Activated T-helper 1 cell treated with anti-CD3 and anti-CD28 coated beads, Interleukin-12 subunit alpha, Interleukin-12 subunit beta, Interleukin-2, Interleukin-4 antibody, amounts not matched to agents 30 ng/mL and 10 ng/mL and 1 ng/mL, durations not matched to agents 14 hours and 24 hours and 36 hours (primary cell): ENCODE measurements at regions of chr5 and their contacts with region 1.

Region 1: DNA sequence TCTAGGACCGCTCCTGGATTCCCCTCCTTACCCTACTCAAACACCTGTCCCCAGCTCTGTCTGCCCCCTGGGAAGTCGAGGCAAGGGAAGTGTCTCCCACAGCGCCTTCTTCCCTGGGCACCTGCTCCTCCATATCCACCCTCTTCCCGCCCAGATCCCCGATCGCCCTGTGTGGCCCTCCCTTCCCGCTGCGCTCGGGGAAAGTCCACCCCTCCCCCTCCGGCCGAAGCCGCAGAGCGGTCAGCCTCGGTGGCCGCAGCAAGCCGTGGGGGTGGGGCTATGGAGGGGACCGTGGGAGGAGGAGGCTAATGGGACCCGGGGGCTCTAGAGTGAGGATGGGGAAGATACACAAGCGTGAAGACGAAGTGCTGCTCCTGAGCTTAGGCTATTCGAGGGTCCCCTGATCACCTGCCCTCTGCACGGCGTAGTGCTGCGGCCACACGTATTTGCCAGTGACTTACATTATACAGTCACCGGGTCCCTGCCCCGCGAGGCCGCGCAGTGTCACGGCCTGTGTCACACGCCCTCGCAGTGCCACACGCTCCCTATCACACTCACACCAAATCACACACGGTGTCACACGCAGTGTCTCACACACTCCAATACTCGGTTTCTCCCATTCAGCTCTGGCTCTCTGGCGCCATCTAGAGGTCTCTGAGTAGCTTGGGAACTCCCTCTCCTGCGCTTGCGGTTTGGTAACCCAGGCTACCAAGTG is 658 bp upstream of the PCDH1 start:
- DNase-seq: peak; percentile 81
- H3K4me3 Mint-ChIP-seq: peak overlapping the region; percentile 76
- H3K27ac Mint-ChIP-seq: peak overlapping the region; percentile 37
- H3K4me1 Mint-ChIP-seq: peaks cover 25% of the 10 kb centered on the region
- H3K27me3 Mint-ChIP-seq: peaks cover 80% of the 10 kb centered on the region

Region 2: DNA sequence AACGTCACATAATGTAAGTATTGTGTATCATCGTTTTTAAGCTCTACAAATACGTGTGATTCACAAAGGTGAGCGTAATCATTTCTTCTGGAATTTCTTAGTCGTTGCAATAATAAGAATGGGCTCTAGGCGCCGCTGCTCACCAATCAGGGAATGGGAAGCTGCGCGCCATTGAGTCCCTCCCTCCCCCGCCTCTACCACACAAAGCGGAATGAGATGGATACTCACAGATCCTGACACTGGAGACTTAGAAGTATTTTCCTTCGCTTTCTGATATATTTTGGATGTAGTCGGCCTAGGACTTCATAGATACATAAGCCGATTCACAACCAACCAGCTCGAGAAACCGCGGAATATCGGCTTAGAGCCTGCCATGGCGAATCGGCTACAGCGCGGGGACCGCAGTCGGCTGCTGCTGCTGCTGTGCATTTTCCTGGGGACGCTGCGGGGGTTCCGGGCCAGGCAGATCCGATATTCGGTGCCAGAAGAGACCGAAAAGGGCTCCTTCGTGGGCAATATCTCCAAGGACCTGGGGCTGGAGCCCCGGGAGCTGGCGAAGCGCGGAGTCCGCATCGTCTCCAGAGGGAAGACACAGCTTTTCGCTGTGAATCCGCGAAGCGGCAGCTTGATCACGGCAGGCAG is 457.9 kb before region 1 on chr5 and contains the start of gene PCDHGA11:
- intact Hi-C with region 1: loop called (anchors 5 kb)
- DNase-seq: peak; percentile 23
- H3K4me3 Mint-ChIP-seq: peak within 1 kb of the TSS; percentile 86
- H3K27ac Mint-ChIP-seq: peak within 1 kb of the TSS; percentile 55
- H3K4me1 Mint-ChIP-seq: peaks cover 14% of the 10 kb centered on the region
- H3K27me3 Mint-ChIP-seq: peaks cover 49% of the 10 kb centered on the region
- total RNA-seq, gene PCDHGA11: 0.16 and 0.24 TPM in 2 replicates

Region 3: GRCh38 chr5:141701360-141702119 is 177.3 kb before region 1 on chr5:
- intact Hi-C with region 1: loop called (anchors 1 kb)
- DNase-seq: no peak
- H3K4me3 Mint-ChIP-seq: peak overlapping the region; percentile 74
- H3K27ac Mint-ChIP-seq: no peak overlapping the region
- H3K4me1 Mint-ChIP-seq: peaks cover 12% of the 10 kb centered on the region
- H3K27me3 Mint-ChIP-seq: peaks cover 45% of the 10 kb centered on the region

Region 4: GRCh38 chr5:141825791-141826560 is 52.9 kb before region 1 on chr5:
- intact Hi-C with region 1: loop called (anchors 2 kb)
- DNase-seq: no peak
- H3K4me3 Mint-ChIP-seq: no peak overlapping the region
- H3K27ac Mint-ChIP-seq: no peak overlapping the region
- H3K4me1 Mint-ChIP-seq: no peaks in the 10 kb centered on the region
- H3K27me3 Mint-ChIP-seq: peaks cover 21% of the 10 kb centered on the region

Region 5: GRCh38 chr5:141923448-141924352 is 44.8 kb after region 1 on chr5 and contains the start of gene DELE1:
- intact Hi-C with region 1: loop called (anchors 1 kb)
- DNase-seq: peak; percentile 88
- H3K4me3 Mint-ChIP-seq: peak within 1 kb of the TSS; percentile 92
- H3K27ac Mint-ChIP-seq: peak within 1 kb of the TSS; percentile 96
- H3K4me1 Mint-ChIP-seq: peaks cover 32% of the 10 kb centered on the region
- H3K27me3 Mint-ChIP-seq: no peaks in the 10 kb centered on the region
- total RNA-seq, gene DELE1: 68.4 and 81.5 TPM in 2 replicates

Region 6: DNA sequence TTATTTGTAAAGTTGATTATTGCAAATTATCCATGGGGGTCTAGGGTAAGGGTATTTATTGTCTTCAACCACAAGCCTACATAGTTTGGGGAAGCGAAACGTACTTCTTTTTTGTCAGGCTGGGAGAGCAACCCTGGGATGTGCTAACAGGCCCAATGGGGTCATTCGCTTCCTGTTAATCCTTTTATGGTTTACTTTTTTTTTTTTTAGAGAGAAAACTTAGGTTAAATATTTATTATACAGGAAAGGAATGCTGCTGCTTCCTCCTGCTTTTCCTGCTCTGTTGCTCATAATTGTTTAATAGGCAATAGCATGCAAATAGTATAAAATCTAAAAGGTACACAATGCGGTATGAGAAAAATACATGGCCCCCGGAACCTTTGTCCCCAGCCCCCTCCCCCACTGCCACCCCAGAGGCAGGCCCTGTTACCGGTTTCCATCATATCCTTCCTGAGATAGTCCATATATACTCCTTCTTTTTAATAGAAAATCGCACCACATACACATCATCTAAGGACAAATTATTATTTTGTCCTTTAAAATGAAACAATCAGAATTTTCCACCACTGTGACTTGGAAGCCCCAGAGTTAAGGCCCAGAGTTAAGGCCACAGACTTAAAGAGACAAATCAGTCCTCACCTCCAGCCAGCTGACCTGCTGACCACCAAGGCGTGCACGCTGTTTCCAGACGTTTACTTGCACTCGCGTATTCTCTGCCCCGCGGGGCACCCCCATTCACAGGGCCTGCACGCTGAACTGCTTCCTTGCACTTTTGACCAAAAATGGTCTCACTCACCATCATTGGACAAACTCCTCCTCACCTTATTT is 313.6 kb after region 1 on chr5:
- intact Hi-C with region 1: no loop called
- DNase-seq: no peak
- H3K4me3 Mint-ChIP-seq: no peak overlapping the region
- H3K27ac Mint-ChIP-seq: no peak overlapping the region
- H3K4me1 Mint-ChIP-seq: no peaks in the 10 kb centered on the region
- H3K27me3 Mint-ChIP-seq: peaks cover 4% of the 10 kb centered on the region